Dendritic cell treated with granulocyte-macrophage colony-stimulating factor and Interleukin-4, amounts not matched to agents 40 ng/mL and 50 ng/mL, for 4 days (primary cell): ENCODE measurements at regions of chr7 and their contacts with region 1.

Region 1: DNA sequence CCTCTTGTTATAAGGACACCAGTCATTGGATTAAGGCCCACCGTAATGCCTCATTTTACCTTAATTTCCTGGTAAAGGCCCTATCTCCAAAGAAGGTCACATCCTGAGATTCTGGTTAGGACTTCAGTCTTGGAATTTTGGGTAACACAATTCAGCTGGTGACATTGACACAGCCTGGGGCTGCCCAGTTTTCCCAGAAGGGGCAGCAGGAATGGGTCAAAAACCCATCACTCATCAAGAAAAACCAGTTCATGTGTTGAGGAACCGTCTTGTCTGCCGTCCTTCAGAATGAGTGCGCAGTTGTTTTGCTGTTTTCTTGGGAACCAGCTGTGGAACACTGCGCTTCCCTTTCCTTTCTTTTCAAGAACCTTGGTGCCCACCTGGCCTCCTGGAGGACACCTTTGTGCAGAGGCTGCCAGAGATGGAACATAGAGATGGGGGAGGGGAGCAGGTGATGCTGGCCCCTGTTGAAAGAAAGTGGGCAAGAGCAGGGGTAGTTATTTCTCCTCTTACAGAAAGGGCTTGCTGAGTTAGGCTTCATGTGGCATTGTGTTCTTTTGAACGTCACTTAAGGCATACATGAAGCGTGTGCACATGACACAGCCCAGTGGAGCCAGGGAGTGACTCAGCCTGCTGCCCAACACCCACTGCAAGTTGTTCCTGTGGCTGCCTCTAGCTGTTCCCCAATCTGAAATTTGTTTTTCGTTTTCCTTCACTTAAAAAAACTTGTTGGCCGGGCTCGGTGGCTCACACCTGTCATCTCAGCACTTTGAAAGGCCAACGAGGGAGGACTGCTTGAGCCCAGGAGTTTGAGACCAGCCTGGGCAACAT is 87.4 kb upstream of the TNS3 start:
- H3K4me3 Mint-ChIP-seq: peak overlapping the region; percentile 57
- H3K27ac Mint-ChIP-seq: peak overlapping the region; percentile 99
- H3K4me1 Mint-ChIP-seq: peaks cover 49% of the 10 kb centered on the region
- H3K27me3 Mint-ChIP-seq: no peaks in the 10 kb centered on the region

Region 2: GRCh38 chr7:47482013-47482875 is 187.0 kb before region 1 on chr7:
- intact Hi-C with region 1: loop called (anchors 1 kb)
- H3K4me3 Mint-ChIP-seq: peak overlapping the region; percentile 41
- H3K27ac Mint-ChIP-seq: peak overlapping the region; percentile 86
- H3K4me1 Mint-ChIP-seq: peaks cover 87% of the 10 kb centered on the region
- H3K27me3 Mint-ChIP-seq: no peaks in the 10 kb centered on the region

Region 3: GRCh38 chr7:47497367-47498096 is 171.7 kb before region 1 on chr7:
- intact Hi-C with region 1: loop called (anchors 5 kb)
- H3K4me3 Mint-ChIP-seq: peak overlapping the region; percentile 65
- H3K27ac Mint-ChIP-seq: peak overlapping the region; percentile 93
- H3K4me1 Mint-ChIP-seq: peaks cover 90% of the 10 kb centered on the region
- H3K27me3 Mint-ChIP-seq: no peaks in the 10 kb centered on the region

Region 4: GRCh38 chr7:47568547-47568946 is 100.7 kb before region 1 on chr7:
- intact Hi-C with region 1: no loop called
- H3K4me3 Mint-ChIP-seq: no peak overlapping the region
- H3K27ac Mint-ChIP-seq: peak overlapping the region; percentile 70
- H3K4me1 Mint-ChIP-seq: peaks cover 69% of the 10 kb centered on the region
- H3K27me3 Mint-ChIP-seq: no peaks in the 10 kb centered on the region

Region 5: DNA sequence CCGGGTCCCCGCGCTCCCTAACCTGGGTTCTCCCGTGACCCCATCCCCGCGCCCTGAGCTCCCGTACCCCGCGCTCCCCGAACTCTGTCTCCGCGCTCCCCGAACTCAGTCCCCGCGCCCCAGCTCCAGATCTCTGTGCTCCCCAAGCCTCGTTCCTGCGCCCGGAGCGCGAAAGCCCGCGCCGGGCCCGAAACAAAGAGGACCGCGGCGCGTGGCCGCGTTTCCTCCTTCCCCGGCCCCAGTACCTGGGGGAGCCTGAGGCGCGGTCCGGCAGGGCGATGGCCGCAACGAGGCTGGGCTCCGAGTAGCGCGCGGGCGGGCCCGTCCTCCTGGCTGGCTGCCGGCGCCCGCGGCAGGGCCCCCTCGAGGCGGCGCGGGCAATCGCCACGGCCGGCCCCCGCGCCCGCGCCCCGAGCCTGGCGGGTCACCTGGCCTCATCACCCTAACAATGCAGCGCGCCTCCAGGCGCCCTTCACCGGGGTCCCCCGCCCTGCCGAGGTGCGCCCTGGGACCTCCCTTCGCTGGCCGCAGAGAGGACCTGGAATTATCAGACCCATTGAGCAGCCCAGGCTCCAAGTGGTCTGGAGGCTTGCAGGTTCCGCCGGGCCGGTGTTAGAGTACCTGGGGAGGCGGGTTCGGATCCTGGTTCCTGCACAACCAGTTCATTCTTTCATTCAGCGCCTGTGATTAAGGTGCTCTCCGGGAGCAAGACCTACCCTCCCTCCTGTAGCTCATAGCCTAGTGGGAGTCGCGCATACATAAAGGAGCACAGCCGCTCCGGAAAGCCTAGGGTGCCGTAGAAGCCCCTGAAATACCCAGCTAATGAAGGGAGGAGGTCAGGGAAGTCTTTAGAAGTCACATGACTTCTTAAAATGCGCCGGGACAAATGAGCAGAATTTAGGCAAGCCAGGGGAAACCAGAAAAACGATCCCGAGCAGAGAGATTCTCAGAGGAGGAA is 87.2 kb before region 1 on chr7 and contains the start of gene TNS3:
- intact Hi-C with region 1: loop called (anchors 2 kb)
- H3K4me3 Mint-ChIP-seq: peak within 1 kb of the TSS; percentile 100
- H3K27ac Mint-ChIP-seq: peak within 1 kb of the TSS; percentile 96
- H3K4me1 Mint-ChIP-seq: peaks cover 81% of the 10 kb centered on the region
- H3K27me3 Mint-ChIP-seq: peaks cover 11% of the 10 kb centered on the region

Region 6: GRCh38 chr7:47720141-47720906 is 51.0 kb after region 1 on chr7:
- intact Hi-C with region 1: no loop called
- H3K4me3 Mint-ChIP-seq: no peak overlapping the region
- H3K27ac Mint-ChIP-seq: no peak overlapping the region
- H3K4me1 Mint-ChIP-seq: no peaks in the 10 kb centered on the region
- H3K27me3 Mint-ChIP-seq: no peaks in the 10 kb centered on the region